ENCODE measurements at regions of chr2 and their contacts with region 1.

Region 1: DNA sequence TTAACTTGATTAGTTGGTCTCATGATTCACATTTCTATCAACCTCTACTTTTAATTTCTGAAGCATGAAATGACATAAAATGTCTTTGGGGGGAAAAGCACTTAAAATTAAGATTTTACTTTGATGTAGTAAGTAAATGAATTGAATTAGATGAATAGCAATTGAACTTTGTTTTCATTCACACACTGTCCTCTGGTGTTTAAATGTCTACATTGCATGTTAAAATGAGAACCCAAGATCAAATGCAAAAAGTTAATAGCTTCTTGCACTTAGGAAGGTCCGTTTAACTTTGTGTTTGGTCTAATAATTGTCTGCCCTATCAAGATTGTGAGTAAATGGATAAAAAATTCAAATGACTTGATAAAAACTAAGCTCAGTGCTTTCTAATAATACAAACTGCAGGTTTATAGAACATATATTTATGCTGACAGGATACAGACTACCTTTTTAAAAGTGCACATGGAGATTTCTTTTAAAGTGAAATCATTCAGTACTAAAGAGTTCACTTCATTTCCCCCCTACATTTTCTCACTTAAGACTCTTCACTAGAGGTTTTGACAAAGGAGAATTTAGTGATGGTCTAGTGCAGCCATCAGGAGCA is 156.2 kb upstream of the NABP1 start:
- DNase-seq: no peak
- ATAC-seq: no peak
- H3K4me3 ChIP-seq: no peak overlapping the region
- H3K4me1 ChIP-seq: no peaks in the 10 kb centered on the region
- CTCF ChIP-seq: peak; percentile 37

Region 2: GRCh38 chr2:191051825-191052778 is 469.6 kb before region 1 on chr2:
- intact Hi-C with region 1: loop called in 1 of 2 experiments (anchors 10 kb)
- DNase-seq: peak in 1 of 3 donors; percentile 52
- ATAC-seq: peak; percentile 69
- H3K4me3 ChIP-seq: no peak overlapping the region
- H3K4me1 ChIP-seq: peaks cover 5% of the 10 kb centered on the region
- CTCF ChIP-seq: no peak

Region 3: DNA sequence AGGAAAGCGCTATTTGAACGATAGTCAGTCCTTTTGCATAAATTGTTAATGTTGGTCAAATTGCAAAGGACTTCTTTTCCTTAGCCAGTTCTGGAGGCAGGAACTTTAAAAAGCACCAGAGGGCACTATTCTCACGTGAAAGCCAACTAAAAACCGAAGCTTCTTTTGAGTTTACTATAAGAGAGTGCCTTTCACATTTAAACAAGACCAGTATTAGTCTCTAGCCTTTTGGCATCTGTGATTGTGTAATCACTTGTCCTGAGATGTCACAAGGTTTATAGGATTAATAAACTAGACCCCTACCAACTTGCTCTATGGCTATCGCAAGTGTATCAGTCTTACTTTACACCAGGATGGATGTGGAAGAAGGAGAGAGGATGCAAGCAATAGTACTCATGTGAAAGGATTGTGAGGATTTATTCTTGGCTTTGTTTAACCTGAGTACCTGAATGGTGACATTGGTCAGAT is 356.5 kb before region 1 on chr2:
- intact Hi-C with region 1: loop called (anchors 5 to 10 kb)
- DNase-seq: peak in 1 of 3 donors; percentile 49
- ATAC-seq: peak; percentile 73
- H3K4me3 ChIP-seq: no peak overlapping the region
- H3K4me1 ChIP-seq: peaks cover 18% of the 10 kb centered on the region
- CTCF ChIP-seq: peak; percentile 28

Region 4: GRCh38 chr2:191777351-191777750 is 255.6 kb after region 1 on chr2:
- intact Hi-C with region 1: no loop called
- DNase-seq: no peak
- ATAC-seq: no peak
- H3K4me3 ChIP-seq: no peak overlapping the region
- H3K4me1 ChIP-seq: no peaks in the 10 kb centered on the region
- CTCF ChIP-seq: no peak

Measured in mucosa of descending colon (tissue), 3 donors.